Activated CD4-positive, alpha-beta memory T cell treated with anti-CD3 and anti-CD28 coated beads for 36 hours (primary cell): ENCODE measurements at regions of chr12 and their contacts with region 1.

Region 1: GRCh38 chr12:57452937-57453509 is 2.1 kb upstream of the INHBE start:
- DNase-seq: peak; percentile 77
- H3K4me3 Mint-ChIP-seq: no peak overlapping the region
- H3K27ac Mint-ChIP-seq: peak overlapping the region; percentile 53
- H3K4me1 Mint-ChIP-seq: peaks cover 13% of the 10 kb centered on the region
- H3K27me3 Mint-ChIP-seq: peaks cover 1% of the 10 kb centered on the region

Region 2: DNA sequence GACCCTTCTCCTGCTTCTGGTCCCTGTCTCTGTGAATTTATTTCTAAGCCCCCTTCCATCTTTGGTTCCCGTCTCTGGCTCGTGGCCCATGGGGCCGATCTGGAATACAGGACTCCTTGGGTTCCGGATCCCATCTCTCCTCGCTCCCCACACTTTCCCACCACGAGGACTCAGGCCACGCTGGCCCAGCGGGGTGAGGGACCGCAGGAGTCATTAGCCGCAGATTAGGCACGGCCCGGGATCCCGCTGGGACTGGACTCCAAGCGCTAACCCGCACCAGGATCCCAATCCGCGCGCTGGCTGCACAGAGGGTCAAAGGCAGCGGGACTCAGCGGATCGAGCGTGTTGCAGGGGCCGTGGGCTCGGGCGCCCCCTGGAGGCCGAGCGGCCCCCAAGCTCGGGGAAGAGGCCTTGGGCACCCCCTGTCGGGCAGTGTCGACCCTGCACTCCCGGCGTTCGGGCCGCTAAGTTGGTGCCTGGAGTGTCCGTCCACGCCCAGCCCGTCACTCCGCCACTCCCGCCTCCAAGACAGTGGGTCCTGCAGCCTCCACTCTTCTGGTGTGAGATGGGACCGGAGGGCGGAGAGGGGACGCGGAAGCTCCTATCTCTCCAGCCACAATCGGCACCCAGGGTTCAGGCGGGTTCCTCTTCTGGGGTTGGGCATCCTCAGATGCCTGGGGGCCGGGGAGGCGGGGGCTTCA is 214.0 kb before region 1 on chr12:
- CTCF ChIA-PET with region 1: interaction called, 16 read pairs
- POLR2A ChIA-PET with region 1: no interaction called
- intact Hi-C with region 1: no loop called
- DNase-seq: peak; percentile 93
- H3K4me3 Mint-ChIP-seq: peak overlapping the region; percentile 82
- H3K27ac Mint-ChIP-seq: no peak overlapping the region
- H3K4me1 Mint-ChIP-seq: peaks cover 60% of the 10 kb centered on the region
- H3K27me3 Mint-ChIP-seq: peaks cover 39% of the 10 kb centered on the region

Region 3: DNA sequence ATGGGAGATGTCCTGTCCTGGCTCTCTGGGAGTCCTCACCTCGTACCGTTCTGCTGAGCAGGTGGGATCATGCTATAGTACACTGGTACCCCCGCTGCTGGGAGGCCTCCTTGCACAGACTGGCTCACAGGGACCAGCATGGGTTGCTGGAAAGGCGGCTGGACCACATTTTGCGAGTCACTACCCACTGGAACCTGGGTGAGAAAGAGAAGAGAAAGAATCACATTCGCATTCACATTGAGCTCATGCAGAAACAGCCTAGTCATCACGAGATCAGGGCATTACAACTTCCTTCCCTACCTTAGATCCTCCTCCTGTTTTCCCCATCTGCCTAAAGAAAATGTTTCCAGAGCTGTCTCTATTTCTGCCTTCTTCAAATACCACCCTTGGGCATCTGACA is 184.8 kb before region 1 on chr12:
- CTCF ChIA-PET with region 1: interaction called, 32 read pairs
- POLR2A ChIA-PET with region 1: no interaction called
- intact Hi-C with region 1: loop called (anchors 1 kb)
- DNase-seq: peak; percentile 66
- H3K4me3 Mint-ChIP-seq: no peak overlapping the region
- H3K27ac Mint-ChIP-seq: peak overlapping the region; percentile 81
- H3K4me1 Mint-ChIP-seq: peaks cover 16% of the 10 kb centered on the region
- H3K27me3 Mint-ChIP-seq: no peaks in the 10 kb centered on the region

Region 4: GRCh38 chr12:57309420-57309819 is 143.6 kb before region 1 on chr12:
- CTCF ChIA-PET with region 1: interaction called, 158 read pairs
- POLR2A ChIA-PET with region 1: interaction called, 4 read pairs
- intact Hi-C with region 1: loop called (anchors 2 kb)
- DNase-seq: no peak
- H3K4me3 Mint-ChIP-seq: no peak overlapping the region
- H3K27ac Mint-ChIP-seq: no peak overlapping the region
- H3K4me1 Mint-ChIP-seq: peaks cover 8% of the 10 kb centered on the region
- H3K27me3 Mint-ChIP-seq: no peaks in the 10 kb centered on the region

Region 5: GRCh38 chr12:57430931-57431720 is 21.9 kb before region 1 on chr12 and contains the start of gene R3HDM2:
- CTCF ChIA-PET with region 1: interaction called, 11 read pairs
- POLR2A ChIA-PET with region 1: interaction called, 3 read pairs
- intact Hi-C with region 1: loop called (anchors 2 kb)
- DNase-seq: peak; percentile 97
- H3K4me3 Mint-ChIP-seq: peak within 1 kb of the TSS; percentile 97
- H3K27ac Mint-ChIP-seq: peak within 1 kb of the TSS; percentile 99
- H3K4me1 Mint-ChIP-seq: peaks cover 37% of the 10 kb centered on the region
- H3K27me3 Mint-ChIP-seq: no peaks in the 10 kb centered on the region
- total RNA-seq, gene R3HDM2: 42.2 to 51.4 TPM

Region 6: DNA sequence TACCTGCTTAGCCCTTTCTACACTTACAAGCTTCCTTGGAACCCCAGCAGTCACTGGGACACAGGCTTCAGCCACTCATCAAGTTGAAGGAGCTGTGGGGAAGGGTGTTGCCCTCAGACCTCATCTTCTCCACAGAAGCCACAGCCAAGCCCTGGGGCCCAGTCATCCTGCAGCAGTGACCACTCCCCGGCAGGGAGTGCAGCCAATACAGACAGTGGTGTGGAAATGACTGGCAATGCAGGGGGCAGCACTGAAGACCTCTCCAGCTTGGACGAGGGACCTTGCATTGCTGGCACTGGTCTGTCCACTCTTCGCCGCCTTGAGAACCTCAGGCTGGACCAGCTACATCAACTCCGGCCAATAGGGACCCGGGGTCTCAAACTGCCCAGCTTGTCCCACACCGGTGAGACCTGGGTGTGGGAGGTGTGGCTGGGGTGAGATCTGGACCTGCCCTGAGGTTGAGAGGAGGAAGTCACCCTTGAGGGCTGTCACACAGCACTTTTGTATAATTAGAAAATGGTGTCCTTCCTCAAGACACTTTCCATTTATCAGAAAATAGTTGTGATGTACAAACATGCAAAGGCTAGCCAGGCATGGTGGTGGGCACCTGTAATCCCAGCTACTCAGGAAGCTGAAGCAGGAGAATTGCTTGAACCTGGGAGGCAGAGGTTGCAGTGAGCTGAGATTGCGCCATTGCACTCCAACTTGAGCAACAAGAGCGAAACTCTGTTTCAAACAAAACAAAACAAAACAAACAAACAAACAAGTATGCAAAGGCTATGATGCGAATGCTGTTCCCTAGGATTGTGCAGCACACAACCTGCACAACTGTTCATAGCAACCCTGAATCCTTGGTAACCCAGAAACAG is 16.5 kb after region 1 on chr12:
- CTCF ChIA-PET with region 1: interaction called, 47 read pairs
- POLR2A ChIA-PET with region 1: no interaction called
- intact Hi-C with region 1: no loop called
- DNase-seq: no peak
- H3K4me3 Mint-ChIP-seq: no peak overlapping the region
- H3K27ac Mint-ChIP-seq: no peak overlapping the region
- H3K4me1 Mint-ChIP-seq: peaks cover 22% of the 10 kb centered on the region
- H3K27me3 Mint-ChIP-seq: no peaks in the 10 kb centered on the region

Region 7: DNA sequence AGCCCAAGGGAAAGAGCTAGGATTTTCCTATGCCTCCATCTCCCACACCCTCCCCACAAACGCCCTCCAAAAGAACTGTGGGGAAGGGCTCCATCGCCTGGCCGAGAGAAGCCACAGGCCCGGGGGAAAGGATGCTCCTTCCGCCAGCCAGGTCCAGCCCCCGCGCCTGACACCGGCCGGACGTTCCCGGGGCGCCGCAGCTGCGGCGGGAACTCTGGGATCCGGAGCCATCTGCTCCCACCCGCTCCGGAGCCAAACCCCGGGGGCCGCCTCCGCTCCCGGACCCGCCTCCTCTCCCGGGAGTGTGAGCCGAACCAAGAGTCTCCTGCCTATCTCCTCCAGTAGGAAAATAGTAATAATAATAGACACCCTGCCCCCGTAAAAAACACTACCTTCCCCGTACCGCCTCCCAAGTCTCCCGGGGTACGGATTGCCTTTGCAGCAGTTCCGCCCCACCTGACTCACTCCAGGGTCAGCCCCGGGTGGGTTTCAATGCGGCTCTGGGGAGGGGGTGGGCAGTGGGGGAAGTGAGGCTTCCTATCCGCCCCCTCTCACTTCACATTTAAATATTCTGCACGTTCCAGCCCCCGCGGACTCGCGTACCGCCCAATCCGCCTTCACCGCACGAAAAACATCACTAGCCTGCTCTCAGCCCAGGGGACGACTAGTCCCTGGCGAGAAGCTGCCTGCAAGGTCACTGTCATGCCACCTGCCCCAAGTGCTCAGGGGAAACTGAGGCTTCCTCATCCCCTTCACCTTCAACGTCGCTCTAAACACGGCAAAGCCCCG is 283.1 kb after region 1 on chr12:
- CTCF ChIA-PET with region 1: no interaction called
- POLR2A ChIA-PET with region 1: no interaction called
- intact Hi-C with region 1: no loop called
- DNase-seq: no peak
- H3K4me3 Mint-ChIP-seq: no peak overlapping the region
- H3K27ac Mint-ChIP-seq: no peak overlapping the region
- H3K4me1 Mint-ChIP-seq: peaks cover 30% of the 10 kb centered on the region
- H3K27me3 Mint-ChIP-seq: no peaks in the 10 kb centered on the region